CD8-positive, alpha-beta T cell (primary cell): ENCODE measurements at regions of chr1 and their contacts with region 1.

Region 1: DNA sequence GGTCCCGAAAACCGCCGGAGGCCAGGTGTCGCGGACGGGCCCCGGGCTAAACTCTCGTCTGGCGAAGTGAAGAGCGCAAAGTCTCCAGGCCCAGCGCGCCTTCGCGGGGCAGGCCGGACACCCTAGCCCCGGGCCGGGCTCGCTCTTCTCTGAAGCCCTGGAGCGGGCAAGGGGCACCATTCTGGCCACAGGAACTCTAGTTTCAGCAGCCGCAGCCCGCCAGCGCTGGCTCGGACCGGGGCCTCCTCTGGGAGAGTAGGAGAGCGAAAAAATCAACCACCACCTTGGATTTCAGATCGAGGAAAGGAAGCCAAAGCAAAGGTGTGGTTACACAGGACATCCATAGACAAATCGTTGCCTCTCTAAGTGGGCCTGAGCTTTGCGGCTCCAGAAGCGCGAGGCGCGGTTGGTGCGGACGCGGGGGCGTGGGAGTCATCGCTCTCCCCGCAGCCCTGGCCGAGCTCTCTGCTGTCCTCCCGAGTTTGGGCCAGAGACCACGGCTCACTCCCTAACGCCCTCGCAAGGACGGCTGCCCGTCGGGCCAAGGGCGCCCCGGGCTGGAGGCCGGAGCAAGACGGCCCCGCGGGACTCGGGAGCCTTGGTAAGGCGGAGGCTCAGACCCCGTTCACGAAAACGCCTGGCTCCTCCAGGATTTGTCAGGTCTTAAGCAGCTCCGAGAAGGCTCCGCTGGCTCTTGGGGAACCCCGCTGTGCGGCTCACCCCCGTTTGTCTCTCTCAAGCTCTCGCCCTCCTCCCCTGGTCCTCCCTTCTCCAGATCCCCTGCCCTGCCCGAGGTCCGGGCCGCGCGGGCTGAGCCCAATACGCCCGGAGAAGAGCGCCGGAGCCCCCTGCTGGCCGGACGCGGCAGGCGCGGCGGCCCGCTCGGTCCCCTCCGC is 132.9 kb upstream of the DPYD start:
- DNase-seq: peak in 7 of 9 experiments; percentile 33 to 72 (median 52)
- ATAC-seq: peak; percentile 87
- H3K4me3 ChIP-seq: peak overlapping the region; percentile 49 to 56
- H3K4me3 Mint-ChIP-seq: peak overlapping the region; percentile 51
- H3K27ac ChIP-seq: no peak overlapping the region
- H3K27ac Mint-ChIP-seq: no peak overlapping the region
- H3K4me1 ChIP-seq: peaks cover 18% of the 10 kb centered on the region
- H3K4me1 Mint-ChIP-seq: peaks cover 22% of the 10 kb centered on the region
- H3K27me3 ChIP-seq: peaks cover 27 to 38% of the 10 kb centered on the region in 2 experiments
- H3K27me3 Mint-ChIP-seq: peaks cover 70% of the 10 kb centered on the region
- CTCF ChIP-seq: peak; percentile 83

Region 2: DNA sequence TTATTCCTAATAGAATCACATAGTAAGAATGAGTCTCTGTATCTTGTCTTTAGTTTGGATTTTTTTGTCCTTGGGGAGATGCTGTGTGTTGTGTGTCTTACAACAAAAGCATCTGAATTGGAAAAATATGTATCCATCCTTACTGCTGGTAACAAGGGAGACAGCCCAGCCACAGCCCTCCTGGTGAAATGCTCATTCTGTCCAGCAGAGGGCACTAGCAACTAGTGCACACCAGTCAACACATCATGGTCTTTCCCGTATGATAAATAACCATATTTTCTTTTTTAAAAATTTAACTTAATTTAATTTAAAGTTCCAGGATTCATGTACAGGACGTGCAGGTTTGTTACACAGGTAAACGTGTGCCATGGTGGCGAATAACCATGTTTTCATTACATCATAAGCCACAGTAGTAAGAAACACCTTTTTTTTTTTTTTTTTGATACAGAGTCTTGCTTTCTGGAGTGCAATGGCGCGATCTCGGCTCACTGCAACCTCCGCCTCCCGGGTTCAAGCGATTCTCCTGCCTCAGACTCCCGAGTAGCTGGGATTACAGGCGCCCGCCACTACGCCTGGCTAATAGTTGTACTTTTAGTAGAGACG is 1087.1 kb before region 1 on chr1:
- CTCF ChIA-PET with region 1: interaction called, 13 read pairs
- POLR2A ChIA-PET with region 1: no interaction called
- intact Hi-C with region 1: loop called (anchors 1 kb)
- DNase-seq: peak; percentile 49 to 77 (median 71)
- ATAC-seq: peak; percentile 69
- H3K4me3 ChIP-seq: no peak overlapping the region
- H3K4me3 Mint-ChIP-seq: no peak overlapping the region
- H3K27ac ChIP-seq: no peak overlapping the region
- H3K27ac Mint-ChIP-seq: no peak overlapping the region
- H3K4me1 ChIP-seq: no peaks in the 10 kb centered on the region
- H3K4me1 Mint-ChIP-seq: no peaks in the 10 kb centered on the region
- H3K27me3 ChIP-seq: peaks cover 0 to 4% of the 10 kb centered on the region in 2 experiments
- H3K27me3 Mint-ChIP-seq: peaks cover 20% of the 10 kb centered on the region
- CTCF ChIP-seq: peak; percentile 80

Region 3: GRCh38 chr1:97186404-97186803 is 867.3 kb before region 1 on chr1:
- CTCF ChIA-PET with region 1: interaction called, 3 read pairs
- POLR2A ChIA-PET with region 1: no interaction called
- intact Hi-C with region 1: loop called (anchors 2 to 5 kb)
- DNase-seq: peak in 2 of 9 experiments; percentile 10 to 18
- ATAC-seq: no peak
- H3K4me3 ChIP-seq: no peak overlapping the region
- H3K4me3 Mint-ChIP-seq: no peak overlapping the region
- H3K27ac ChIP-seq: no peak overlapping the region
- H3K27ac Mint-ChIP-seq: no peak overlapping the region
- H3K4me1 ChIP-seq: no peaks in the 10 kb centered on the region
- H3K4me1 Mint-ChIP-seq: no peaks in the 10 kb centered on the region
- H3K27me3 ChIP-seq: no peaks in the 10 kb centered on the region
- H3K27me3 Mint-ChIP-seq: no peaks in the 10 kb centered on the region
- CTCF ChIP-seq: no peak

Region 4: GRCh38 chr1:97243973-97244560 is 809.7 kb before region 1 on chr1:
- CTCF ChIA-PET with region 1: interaction called, 3 read pairs
- POLR2A ChIA-PET with region 1: no interaction called
- intact Hi-C with region 1: loop called in 1 of 2 experiments (anchors 2 kb)
- DNase-seq: peak in 2 of 9 experiments; percentile 3 to 4
- ATAC-seq: no peak
- H3K4me3 ChIP-seq: no peak overlapping the region
- H3K4me3 Mint-ChIP-seq: no peak overlapping the region
- H3K27ac ChIP-seq: no peak overlapping the region
- H3K27ac Mint-ChIP-seq: no peak overlapping the region
- H3K4me1 ChIP-seq: no peaks in the 10 kb centered on the region
- H3K4me1 Mint-ChIP-seq: no peaks in the 10 kb centered on the region
- H3K27me3 ChIP-seq: no peaks in the 10 kb centered on the region
- H3K27me3 Mint-ChIP-seq: no peaks in the 10 kb centered on the region
- CTCF ChIP-seq: no peak

Region 5: DNA sequence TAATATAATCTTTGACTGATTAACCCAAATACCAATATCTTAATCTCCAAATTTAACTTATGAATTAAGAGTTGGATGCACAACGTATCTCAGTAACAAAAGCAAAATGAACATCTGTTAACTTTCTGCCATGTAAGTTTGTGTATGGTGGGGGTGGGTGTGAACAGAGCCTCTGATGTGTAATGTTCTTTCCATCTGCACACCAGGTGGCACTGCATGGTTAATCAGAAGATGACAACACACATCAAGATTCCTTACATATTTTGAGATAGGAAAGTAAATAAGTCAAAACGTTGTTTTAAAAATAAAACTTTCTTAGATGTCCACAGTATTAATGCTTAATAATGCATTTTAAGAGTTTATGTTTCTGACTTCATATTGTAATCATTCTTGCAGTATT is 384.8 kb before region 1 on chr1:
- CTCF ChIA-PET with region 1: interaction called, 4 read pairs
- POLR2A ChIA-PET with region 1: no interaction called
- intact Hi-C with region 1: loop called (anchors 1 kb)
- DNase-seq: peak in 2 of 9 experiments; percentile 15 to 33
- ATAC-seq: no peak
- H3K4me3 ChIP-seq: no peak overlapping the region
- H3K4me3 Mint-ChIP-seq: no peak overlapping the region
- H3K27ac ChIP-seq: no peak overlapping the region
- H3K27ac Mint-ChIP-seq: no peak overlapping the region
- H3K4me1 ChIP-seq: no peaks in the 10 kb centered on the region
- H3K4me1 Mint-ChIP-seq: no peaks in the 10 kb centered on the region
- H3K27me3 ChIP-seq: no peaks in the 10 kb centered on the region
- H3K27me3 Mint-ChIP-seq: no peaks in the 10 kb centered on the region
- CTCF ChIP-seq: no peak

Region 6: DNA sequence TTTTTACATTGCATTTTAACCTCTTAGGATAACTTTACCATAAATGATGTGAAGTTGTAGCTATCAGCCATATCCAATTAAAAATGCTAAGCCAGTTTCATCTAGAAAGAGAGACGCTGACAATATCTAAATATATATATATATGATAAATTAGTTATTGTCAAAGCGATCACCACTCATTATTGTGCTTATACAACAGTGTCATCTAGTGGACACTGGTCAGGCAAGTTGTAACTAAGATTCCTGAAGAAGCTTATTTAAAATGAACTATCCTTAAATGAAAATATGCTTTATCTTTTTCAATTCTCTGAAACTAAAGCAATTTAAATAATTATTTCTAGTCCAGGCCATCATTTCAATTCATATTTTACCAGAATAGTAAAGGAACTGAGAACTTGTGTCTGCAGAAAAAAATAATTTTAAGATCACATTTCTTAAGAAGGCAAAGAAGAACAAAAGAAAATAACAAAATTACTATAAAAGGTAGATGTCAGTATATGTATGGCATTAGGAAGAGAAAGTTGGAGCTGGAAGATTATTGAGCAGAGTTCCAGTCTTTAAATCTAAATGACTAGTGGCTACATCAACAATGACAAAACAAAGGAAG is 414.5 kb after region 1 on chr1:
- CTCF ChIA-PET with region 1: interaction called, 4 read pairs
- POLR2A ChIA-PET with region 1: no interaction called
- intact Hi-C with region 1: loop called in 1 of 2 experiments (anchors 5 kb)
- DNase-seq: peak in 2 of 9 experiments; percentile 57 to 65
- ATAC-seq: no peak
- H3K4me3 ChIP-seq: no peak overlapping the region
- H3K4me3 Mint-ChIP-seq: no peak overlapping the region
- H3K27ac ChIP-seq: no peak overlapping the region
- H3K27ac Mint-ChIP-seq: no peak overlapping the region
- H3K4me1 ChIP-seq: no peaks in the 10 kb centered on the region
- H3K4me1 Mint-ChIP-seq: no peaks in the 10 kb centered on the region
- H3K27me3 ChIP-seq: no peaks in the 10 kb centered on the region
- H3K27me3 Mint-ChIP-seq: no peaks in the 10 kb centered on the region
- CTCF ChIP-seq: peak; percentile 46